ENCODE measurements at regions of chr10 and their contacts with region 1.

Region 1: DNA sequence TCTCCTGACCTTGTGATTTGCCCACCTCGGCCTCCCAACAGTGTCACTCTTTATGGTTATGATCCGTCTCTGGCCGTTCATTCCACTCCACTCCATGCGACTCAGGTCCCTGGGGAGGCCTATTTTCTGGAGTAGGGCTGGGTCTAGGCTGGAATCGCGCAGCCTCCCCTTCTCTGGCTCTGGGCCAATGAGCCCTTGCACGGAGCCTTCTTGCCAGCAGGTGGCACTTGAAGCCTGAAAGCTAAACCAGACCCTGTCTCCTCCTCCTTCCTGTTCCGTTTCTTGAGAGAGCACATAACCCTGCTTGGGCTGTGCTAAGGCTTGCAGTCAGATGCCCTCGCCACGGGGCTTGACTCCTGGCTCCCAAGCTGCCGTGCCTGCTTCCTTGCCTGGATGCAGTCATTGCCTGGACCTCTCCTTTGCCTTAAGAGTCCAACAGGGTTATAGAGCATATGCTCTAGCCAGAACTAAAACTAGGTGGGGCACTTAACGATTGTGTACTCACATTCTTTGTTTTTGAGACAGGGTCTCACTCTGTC is 9.6 kb upstream of the DNAJB12 start:
- DNase-seq: peak; percentile 90
- ATAC-seq: peak; percentile 97 to 98

Region 2: DNA sequence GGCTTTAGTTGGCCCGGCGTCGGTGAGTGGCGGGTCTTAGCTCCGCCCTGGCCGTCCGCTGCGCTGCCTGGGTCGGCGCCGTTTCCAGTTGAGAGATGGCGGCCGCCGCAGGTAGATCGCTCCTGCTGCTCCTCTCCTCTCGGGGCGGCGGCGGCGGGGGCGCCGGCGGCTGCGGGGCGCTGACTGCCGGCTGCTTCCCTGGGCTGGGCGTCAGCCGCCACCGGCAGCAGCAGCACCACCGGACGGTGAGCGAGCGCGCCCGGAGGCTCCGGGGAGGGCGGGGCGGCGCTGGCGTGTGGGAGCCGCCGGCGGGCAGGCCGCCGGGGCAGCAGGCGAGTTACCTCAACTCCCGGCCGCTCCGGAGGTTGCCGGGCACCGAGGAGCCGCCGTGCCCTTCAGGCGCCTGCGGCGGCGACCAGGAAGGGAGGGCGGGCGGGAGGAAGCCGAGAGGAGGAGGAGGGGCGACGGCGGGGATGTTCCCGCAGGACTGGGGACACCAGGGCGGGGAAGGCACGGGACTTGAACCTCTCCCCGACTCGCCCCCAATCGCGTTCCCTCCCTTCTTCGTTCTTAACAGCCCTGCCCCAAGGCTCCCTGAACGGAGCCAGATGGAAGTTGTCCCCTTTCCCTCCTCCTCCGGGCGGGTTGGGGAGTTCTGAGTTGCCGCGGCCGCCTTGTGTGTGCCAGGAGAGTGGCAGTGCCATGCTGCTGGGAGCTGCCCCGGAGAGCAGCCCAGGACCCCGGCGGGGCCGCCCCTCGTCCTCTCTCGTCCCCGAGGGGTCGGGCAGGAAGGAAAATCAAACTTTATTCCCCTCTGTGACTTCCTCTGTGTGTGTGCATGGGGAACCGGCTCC is 328.0 kb after region 1 on chr10 and contains the start of gene MCU:
- intact Hi-C with region 1: loop called (anchors 10 kb)
- DNase-seq: peak; percentile 96
- ATAC-seq: peak; percentile 98 to 99
- total RNA-seq, gene MCU: 16.1 to 21.1 TPM

Region 3: DNA sequence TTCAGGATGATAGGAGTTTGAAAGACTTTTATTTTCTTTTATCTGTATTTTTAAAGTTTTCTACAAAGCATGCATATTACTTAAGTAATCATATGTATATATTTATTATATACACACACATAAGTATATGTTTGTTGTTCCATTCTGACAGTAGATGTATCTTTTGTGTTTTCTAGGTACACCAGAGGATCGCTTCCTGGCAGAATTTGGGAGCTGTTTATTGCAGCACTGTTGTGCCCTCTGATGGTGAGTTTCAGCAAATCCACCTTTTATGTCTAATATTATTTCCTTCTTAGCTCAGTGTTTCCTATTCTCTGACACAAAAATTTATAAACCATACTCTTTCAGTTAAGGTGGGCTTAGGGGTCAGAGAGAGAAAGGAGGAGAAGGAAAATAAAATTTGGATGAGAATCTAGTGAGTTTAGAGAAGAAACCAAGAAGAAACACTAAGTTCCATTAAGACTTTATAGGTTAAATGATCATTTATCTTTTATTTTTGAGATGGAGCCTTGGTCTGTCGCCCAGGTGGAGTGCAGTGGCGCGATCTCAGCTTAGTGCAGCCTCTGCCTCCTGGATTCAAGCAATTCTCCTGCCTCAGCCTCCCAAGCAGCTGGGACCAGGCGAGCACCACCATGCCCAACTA is 470.0 kb after region 1 on chr10:
- intact Hi-C with region 1: loop called (anchors 2 to 10 kb)
- DNase-seq: peak; percentile 31
- ATAC-seq: peak; percentile 72 to 73

Region 4: GRCh38 chr10:72875250-72876055 is 511.1 kb after region 1 on chr10:
- intact Hi-C with region 1: loop called in 1 of 2 experiments (anchors 10 kb)
- DNase-seq: no peak
- ATAC-seq: no peak

Region 5: DNA sequence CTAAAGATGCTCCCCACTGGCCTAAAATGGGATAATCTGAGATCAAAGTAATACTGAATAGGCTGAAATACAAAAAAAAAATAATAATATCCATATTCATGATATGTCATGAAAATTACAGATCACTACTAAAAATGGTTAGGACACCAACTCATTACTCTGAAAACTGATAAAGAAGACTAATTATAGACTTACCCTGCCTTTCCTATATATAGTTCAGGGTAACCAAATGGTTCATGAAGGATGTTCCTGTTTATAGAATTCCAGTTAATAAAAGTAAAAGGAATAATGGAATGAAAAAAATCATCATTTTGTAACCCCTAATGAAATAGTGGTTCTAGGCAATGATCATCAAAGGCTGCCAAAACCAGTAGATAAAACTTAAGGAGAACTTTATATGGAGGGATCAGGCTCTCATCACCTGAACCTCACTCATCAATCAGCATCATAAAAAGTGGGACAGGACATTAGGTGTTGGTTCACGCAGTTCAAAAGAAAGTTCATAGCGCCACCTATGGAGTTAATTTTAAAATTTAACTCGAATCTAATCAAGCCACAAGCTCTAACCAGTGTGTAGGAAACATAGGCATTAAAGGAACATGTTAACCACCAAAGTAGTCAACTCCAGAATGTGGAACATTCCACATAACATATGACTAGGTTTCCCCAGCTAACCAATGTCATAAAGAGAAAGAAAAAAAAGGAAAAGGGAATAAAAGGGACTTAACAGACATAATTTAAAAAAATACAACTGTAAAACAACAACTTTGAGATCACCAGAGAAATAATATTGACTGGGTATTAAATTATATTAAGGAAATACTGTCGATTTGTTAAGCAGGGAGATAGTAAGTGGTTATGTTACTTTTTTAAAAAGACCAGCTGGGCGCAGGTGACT is 696.7 kb after region 1 on chr10:
- intact Hi-C with region 1: loop called in 1 of 2 experiments (anchors 10 kb)
- DNase-seq: no peak
- ATAC-seq: peak; percentile 48 to 59

Region 6: DNA sequence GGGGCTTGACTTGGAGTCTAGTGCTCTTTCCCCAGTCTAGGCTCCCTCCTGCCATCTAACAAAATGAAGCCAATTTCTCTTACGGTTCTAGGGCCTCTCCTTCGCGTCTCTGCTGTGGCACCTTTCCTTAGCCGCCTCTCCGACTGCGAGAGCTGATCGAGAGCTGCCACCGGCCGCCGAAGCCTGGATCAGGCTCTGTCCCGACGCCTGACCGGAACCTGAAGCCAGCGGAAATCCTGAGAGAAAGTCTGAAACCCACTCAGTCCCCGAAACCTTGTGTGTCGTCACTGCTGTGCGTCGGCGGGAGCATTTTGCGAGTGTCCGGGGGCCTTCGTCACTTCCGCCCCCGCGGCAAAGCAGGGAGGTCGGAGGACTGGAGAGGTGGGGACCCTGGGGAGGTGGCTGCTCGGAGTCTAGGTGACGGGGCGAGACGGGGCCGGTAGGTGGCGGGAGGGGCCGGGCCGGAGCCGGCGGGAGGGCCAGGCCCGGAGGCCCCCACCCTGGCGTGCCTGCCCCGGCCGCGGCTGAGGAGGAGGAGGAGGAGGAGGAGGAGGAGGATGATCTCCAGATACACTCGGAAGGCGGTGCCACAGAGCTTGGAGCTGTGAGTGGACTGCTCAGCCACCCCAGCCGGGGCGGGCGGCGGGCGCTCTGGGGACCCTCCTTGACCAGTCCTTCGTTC is 803.6 kb after region 1 on chr10 and contains the starts of genes ECD and FAM149B1:
- intact Hi-C with region 1: loop called in 1 of 2 experiments (anchors 10 kb)
- DNase-seq: peak; percentile 96
- ATAC-seq: peak; percentile 99
- total RNA-seq, gene ECD: 17.3 to 18.2 TPM
- total RNA-seq, gene FAM149B1: 13.6 to 15.3 TPM